ENCODE measurements at regions of chr14 and their contacts with region 1.

Region 1: GRCh38 chr14:93206793-93207467 is at the starts of genes GON7 and UBR7:
- DNase-seq: peak; percentile 95
- H3K4me3 Mint-ChIP-seq: peak within 1 kb of the TSS; percentile 76
- H3K27ac Mint-ChIP-seq: peak within 1 kb of the TSS; percentile 91
- H3K4me1 Mint-ChIP-seq: peaks cover 50% of the 10 kb centered on the region
- H3K27me3 Mint-ChIP-seq: no peaks in the 10 kb centered on the region

Region 2: GRCh38 chr14:93085911-93086310 is 121.0 kb before region 1 on chr14:
- CTCF ChIA-PET with region 1: no interaction called
- DNase-seq: no peak
- H3K4me3 Mint-ChIP-seq: no peak overlapping the region
- H3K27ac Mint-ChIP-seq: no peak overlapping the region
- H3K4me1 Mint-ChIP-seq: peaks cover 30% of the 10 kb centered on the region
- H3K27me3 Mint-ChIP-seq: no peaks in the 10 kb centered on the region

Region 3: GRCh38 chr14:93184388-93185353 is 22.3 kb before region 1 on chr14 and contains the starts of genes LYSET and MOAP1:
- CTCF ChIA-PET with region 1: interaction called, 16 read pairs
- DNase-seq: peak; percentile 95
- H3K4me3 Mint-ChIP-seq: peak within 1 kb of the TSS; percentile 96
- H3K27ac Mint-ChIP-seq: peak within 1 kb of the TSS; percentile 94
- H3K4me1 Mint-ChIP-seq: peaks cover 38% of the 10 kb centered on the region
- H3K27me3 Mint-ChIP-seq: no peaks in the 10 kb centered on the region

Measured in activated naive CD4-positive, alpha-beta T cell treated with anti-CD3 and anti-CD28 coated beads, Interleukin-2, amount 10 ng/mL, durations not matched to agents 7 days and 5 days (primary cell).